Activated naive CD4-positive, alpha-beta T cell treated with anti-CD3 and anti-CD28 coated beads for 36 hours (primary cell): ENCODE measurements at regions of chr14 and their contacts with region 1.

Region 1: DNA sequence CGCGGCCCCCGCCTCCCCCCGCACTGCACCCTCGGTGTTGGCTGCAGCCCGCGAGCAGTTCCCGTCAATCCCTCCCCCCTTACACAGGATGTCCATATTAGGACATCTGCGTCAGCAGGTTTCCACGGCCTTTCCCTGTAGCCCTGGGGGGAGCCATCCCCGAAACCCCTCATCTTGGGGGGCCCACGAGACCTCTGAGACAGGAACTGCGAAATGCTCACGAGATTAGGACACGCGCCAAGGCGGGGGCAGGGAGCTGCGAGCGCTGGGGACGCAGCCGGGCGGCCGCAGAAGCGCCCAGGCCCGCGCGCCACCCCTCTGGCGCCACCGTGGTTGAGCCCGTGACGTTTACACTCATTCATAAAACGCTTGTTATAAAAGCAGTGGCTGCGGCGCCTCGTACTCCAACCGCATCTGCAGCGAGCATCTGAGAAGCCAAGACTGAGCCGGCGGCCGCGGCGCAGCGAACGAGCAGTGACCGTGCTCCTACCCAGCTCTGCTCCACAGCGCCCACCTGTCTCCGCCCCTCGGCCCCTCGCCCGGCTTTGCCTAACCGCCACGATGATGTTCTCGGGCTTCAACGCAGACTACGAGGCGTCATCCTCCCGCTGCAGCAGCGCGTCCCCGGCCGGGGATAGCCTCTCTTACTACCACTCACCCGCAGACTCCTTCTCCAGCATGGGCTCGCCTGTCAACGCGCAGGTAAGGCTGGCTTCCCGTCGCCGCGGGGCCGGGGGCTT is at the start of gene FOS:
- DNase-seq: peak; percentile 92
- H3K4me3 Mint-ChIP-seq: peak within 1 kb of the TSS; percentile 93
- H3K27ac Mint-ChIP-seq: peak within 1 kb of the TSS; percentile 90
- H3K4me1 Mint-ChIP-seq: peaks cover 29% of the 10 kb centered on the region
- H3K27me3 Mint-ChIP-seq: peaks cover 26% of the 10 kb centered on the region
- total RNA-seq, gene FOS: 34.5 to 35.7 TPM

Region 2: GRCh38 chr14:75132382-75133086 is 146.1 kb before region 1 on chr14:
- CTCF ChIA-PET with region 1: interaction called, 10 read pairs
- intact Hi-C with region 1: no loop called
- DNase-seq: peak; percentile 64
- H3K4me3 Mint-ChIP-seq: no peak overlapping the region
- H3K27ac Mint-ChIP-seq: peak overlapping the region; percentile 24
- H3K4me1 Mint-ChIP-seq: peaks cover 19% of the 10 kb centered on the region
- H3K27me3 Mint-ChIP-seq: no peaks in the 10 kb centered on the region

Region 3: DNA sequence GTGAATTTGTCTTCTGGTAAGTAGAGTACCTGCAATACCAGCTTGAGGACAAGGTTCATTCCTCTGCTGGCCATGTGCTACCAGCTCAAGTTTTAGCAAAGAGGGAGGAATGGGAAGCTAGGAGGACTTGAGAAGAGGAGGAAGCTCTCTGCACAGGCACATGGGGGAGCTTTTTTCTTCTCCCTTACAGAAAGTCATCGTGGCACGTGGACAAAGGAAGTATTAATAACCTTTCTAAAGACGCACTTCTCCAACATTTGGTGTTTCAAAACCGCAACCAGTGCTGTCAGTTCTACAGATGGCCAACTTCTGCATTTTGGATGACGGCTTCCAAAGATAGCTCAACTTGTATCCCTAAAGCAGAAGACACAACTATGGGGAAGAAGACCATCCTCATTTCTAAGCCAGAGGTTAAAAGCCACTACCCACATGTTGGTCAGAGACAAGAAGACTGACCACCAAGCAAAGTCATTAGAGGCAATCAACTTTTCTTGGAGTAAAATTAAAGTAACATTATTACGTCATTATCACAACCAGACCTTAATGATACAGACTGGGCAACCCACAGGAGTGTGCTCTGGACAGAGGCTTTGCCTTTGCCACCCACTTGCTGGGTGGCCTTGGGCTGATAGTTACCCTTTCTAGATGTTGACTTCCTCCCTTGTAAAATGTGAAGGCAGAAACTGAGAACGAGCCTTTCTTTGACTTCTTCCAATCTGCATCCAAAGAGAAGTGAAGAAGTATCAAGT is 89.9 kb before region 1 on chr14:
- CTCF ChIA-PET with region 1: no interaction called
- intact Hi-C with region 1: no loop called
- DNase-seq: no peak
- H3K4me3 Mint-ChIP-seq: no peak overlapping the region
- H3K27ac Mint-ChIP-seq: no peak overlapping the region
- H3K4me1 Mint-ChIP-seq: peaks cover 3% of the 10 kb centered on the region
- H3K27me3 Mint-ChIP-seq: no peaks in the 10 kb centered on the region

Region 4: GRCh38 chr14:75230140-75231045 is 48.2 kb before region 1 on chr14:
- CTCF ChIA-PET with region 1: no interaction called
- intact Hi-C with region 1: loop called (anchors 1 kb)
- DNase-seq: peak; percentile 81
- H3K4me3 Mint-ChIP-seq: no peak overlapping the region
- H3K27ac Mint-ChIP-seq: no peak overlapping the region
- H3K4me1 Mint-ChIP-seq: peaks cover 46% of the 10 kb centered on the region
- H3K27me3 Mint-ChIP-seq: no peaks in the 10 kb centered on the region

Region 5: DNA sequence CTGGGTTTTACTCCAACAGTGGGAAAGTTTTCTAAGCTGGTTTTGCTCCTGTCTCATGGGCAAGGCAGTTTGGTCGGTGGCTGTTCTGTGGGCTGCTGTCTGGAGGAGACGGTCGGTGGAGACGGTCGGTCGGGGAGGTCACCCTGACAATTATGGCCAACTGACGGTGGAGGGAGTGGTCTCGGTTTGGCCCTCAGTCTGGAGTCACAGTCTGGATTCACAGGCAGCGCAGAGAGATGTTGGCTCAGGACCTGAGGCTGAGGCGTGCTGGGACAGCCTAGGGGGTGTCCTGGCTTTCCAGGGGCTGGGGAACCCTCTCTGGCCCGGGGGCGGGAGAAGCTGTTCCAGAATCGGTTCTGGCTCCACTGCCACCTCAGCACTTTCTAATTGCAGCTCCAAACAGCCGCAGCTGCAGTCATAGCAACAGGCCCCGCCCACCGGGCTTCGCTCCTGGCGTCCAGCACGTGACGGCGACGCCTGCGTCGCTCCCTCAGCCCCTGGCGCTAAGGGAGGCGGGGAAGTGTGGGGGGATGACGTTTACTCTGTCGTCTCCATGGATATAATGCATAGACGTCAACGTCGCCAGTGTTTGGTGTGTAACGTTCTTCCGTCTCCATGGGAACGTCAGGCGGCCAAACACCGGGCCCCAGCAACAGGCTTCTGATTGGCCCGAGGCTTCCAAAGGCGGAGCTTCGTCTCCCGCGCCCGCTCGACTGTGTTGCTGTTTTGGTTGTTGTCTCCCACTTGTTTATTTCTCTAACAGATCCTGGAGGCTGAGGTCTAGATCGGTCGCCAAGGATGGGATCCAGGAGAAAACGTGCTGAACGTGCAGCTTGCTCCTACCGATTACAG is 19.8 kb before region 1 on chr14:
- CTCF ChIA-PET with region 1: interaction called, 5 read pairs
- intact Hi-C with region 1: loop called (anchors 1 kb)
- DNase-seq: peak; percentile 99
- H3K4me3 Mint-ChIP-seq: peak overlapping the region; percentile 77
- H3K27ac Mint-ChIP-seq: peak overlapping the region; percentile 77
- H3K4me1 Mint-ChIP-seq: peaks cover 18% of the 10 kb centered on the region
- H3K27me3 Mint-ChIP-seq: no peaks in the 10 kb centered on the region

Region 6: DNA sequence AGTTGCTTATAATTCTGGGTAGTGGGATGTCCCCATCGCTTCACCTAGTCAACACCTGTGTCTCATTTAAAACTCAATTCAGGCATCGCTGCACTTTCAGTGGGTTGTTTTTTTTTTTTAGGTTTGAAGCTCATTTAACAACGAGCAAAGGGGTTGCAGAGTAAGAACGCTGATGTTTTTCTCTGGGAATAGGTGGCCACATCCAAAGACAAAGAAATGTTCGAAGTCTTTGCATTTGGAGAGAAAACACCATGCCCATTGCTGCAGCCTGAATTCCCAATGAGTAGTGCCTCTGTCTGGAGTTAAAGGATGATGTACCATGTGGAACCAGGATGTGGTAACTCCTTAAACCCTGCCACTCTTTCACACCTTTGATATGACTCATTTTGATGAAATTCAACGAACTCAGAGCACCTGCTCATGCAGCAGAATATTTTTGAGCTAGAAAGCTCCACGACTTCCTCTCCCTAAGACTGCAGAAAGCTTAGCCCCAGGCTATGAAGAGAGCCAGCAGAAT is 208.6 kb after region 1 on chr14:
- CTCF ChIA-PET with region 1: no interaction called
- intact Hi-C with region 1: no loop called
- DNase-seq: peak; percentile 35
- H3K4me3 Mint-ChIP-seq: no peak overlapping the region
- H3K27ac Mint-ChIP-seq: no peak overlapping the region
- H3K4me1 Mint-ChIP-seq: peaks cover 22% of the 10 kb centered on the region
- H3K27me3 Mint-ChIP-seq: peaks cover 3% of the 10 kb centered on the region

Region 7: GRCh38 chr14:75821831-75822521 is 543.4 kb after region 1 on chr14:
- CTCF ChIA-PET with region 1: no interaction called
- intact Hi-C with region 1: no loop called
- DNase-seq: no peak
- H3K4me3 Mint-ChIP-seq: no peak overlapping the region
- H3K27ac Mint-ChIP-seq: no peak overlapping the region
- H3K4me1 Mint-ChIP-seq: peaks cover 3% of the 10 kb centered on the region
- H3K27me3 Mint-ChIP-seq: no peaks in the 10 kb centered on the region